Mammary epithelial cell (primary cell): ENCODE measurements at regions of chr11 and their contacts with region 1.

Region 1: DNA sequence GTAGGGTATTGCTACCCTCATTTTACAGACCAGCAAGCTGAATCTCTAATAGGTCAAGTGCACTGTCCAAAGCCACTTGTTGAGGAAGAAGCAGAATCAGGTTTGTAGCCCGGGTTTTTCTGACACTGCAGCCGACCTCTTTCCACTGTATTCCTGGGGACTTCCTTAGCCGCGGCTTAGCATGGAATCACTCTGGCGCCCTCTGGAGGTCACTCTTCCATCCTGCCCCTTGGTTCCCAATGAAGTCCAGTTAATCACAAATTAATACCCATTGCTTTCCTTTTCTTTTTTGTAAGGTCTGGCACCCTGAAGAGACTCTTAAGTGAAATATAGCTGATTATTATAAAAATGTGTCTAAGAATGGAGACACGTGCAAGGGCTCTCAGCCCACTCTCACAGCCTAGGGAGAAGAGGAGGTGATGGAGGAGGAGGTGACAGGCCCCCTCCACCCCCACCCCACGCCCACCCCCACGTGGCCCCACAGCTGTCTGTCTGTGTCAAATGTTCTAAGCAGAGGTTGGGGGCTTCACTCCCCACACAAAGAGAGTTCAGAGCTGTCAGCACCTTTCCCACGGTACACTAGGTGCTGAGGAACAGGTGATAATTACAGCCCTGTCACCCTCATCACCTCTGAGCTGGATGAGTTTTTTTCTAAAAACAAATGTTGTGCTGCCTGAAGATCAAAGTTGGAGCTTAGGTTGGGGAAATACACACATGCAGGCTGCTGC is 57.7 kb upstream of the DRD2 start:
- DNase-seq: peak; percentile 64
- H3K4me3 ChIP-seq: no peak overlapping the region
- H3K27ac ChIP-seq: no peak overlapping the region
- H3K4me1 ChIP-seq: peaks cover 40% of the 10 kb centered on the region
- H3K27me3 ChIP-seq: no peaks in the 10 kb centered on the region
- CTCF ChIP-seq: peak; percentile 93 to 96

Region 2: GRCh38 chr11:113314389-113315301 is 218.2 kb before region 1 on chr11 and contains the start of gene TTC12:
- CTCF ChIA-PET with region 1: no interaction called
- dilution Hi-C with region 1: no loop called
- in situ Hi-C with region 1: loop called (anchors 5 kb)
- intact Hi-C with region 1: loop called (anchors 2 kb)
- DNase-seq: peak; percentile 94
- H3K4me3 ChIP-seq: peak within 1 kb of the TSS; percentile 68 to 95 (median 89)
- H3K27ac ChIP-seq: peak within 1 kb of the TSS; percentile 95
- H3K4me1 ChIP-seq: peaks cover 35% of the 10 kb centered on the region
- H3K27me3 ChIP-seq: no peaks in the 10 kb centered on the region
- CTCF ChIP-seq: no peak
- total RNA-seq, gene TTC12: 32.5 to 36.5 TPM

Region 3: DNA sequence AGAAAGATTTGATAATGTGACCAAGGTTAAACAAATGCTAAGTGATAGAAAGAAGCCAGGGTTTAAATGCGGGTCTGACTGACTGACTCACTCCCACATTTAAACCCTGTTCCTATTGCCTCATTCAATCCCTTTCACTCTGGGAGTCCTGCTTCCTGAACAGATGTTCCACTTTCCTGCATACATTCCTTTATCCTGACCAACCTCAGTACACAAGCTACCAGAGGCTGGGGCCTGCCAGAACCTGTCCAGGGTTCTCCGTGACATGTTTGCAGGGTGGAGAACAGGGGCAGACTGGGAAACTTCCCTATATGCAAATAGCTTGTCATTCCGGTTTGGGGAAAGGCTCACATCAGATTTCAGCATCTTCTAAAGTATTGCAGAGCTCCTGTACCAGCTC is 148.3 kb before region 1 on chr11:
- CTCF ChIA-PET with region 1: interaction called, 4 read pairs
- dilution Hi-C with region 1: no loop called
- in situ Hi-C with region 1: no loop called
- intact Hi-C with region 1: loop called (anchors 5 kb)
- DNase-seq: peak; percentile 100
- H3K4me3 ChIP-seq: no peak overlapping the region
- H3K27ac ChIP-seq: peak overlapping the region; percentile 85
- H3K4me1 ChIP-seq: peaks cover 41% of the 10 kb centered on the region
- H3K27me3 ChIP-seq: no peaks in the 10 kb centered on the region
- CTCF ChIP-seq: no peak

Region 4: DNA sequence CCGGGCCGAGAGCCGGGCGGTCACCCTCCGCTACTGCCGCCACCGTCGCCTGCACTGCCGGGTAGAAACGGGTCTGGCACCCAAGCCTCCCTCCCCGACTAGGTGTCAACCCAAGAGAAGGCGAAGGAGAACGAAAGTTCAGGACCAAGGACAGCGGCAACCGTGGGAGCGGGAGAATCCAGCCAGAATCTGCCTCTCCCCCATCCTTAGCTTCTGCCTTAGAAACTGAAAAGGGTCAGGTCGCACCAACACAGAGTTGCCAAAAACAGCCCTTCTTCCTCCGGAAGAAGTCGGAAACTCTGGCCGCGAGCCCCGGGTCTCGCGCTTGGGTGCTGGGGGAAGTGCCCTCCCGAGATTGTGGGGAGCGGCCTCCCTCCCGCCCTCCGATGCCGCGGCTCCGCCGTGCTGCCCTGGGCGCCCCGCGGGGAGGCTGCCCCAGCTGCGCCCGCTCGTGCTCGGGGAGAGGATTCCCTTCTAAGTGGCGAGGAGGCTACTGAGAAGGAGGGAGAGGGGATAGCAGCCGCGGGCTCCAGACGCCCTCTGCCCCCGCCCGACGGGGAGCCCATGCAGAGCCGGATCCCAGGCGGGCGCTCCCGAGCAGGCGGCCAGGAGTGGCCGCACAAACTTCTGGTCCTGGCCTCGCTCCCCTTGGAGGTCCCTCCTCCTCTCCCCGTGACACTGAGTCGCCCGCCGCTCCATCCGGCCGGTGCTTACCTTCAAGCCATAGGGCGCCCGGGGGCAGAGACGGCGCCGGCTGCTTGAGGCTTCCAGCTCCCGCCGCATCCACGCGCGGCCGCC is 58.3 kb before region 1 on chr11:
- CTCF ChIA-PET with region 1: no interaction called
- dilution Hi-C with region 1: no loop called
- in situ Hi-C with region 1: no loop called
- intact Hi-C with region 1: loop called (anchors 1 kb)
- DNase-seq: peak; percentile 84
- H3K4me3 ChIP-seq: peak overlapping the region; percentile 49 to 59 (median 50)
- H3K27ac ChIP-seq: peak overlapping the region; percentile 16
- H3K4me1 ChIP-seq: peaks cover 14% of the 10 kb centered on the region
- H3K27me3 ChIP-seq: no peaks in the 10 kb centered on the region
- CTCF ChIP-seq: no peak

Region 5: GRCh38 chr11:113577356-113578032 is 44.6 kb after region 1 on chr11:
- CTCF ChIA-PET with region 1: no interaction called
- dilution Hi-C with region 1: no loop called
- in situ Hi-C with region 1: no loop called
- intact Hi-C with region 1: no loop called
- DNase-seq: peak; percentile 14
- H3K4me3 ChIP-seq: no peak overlapping the region
- H3K27ac ChIP-seq: no peak overlapping the region
- H3K4me1 ChIP-seq: peaks cover 11% of the 10 kb centered on the region
- H3K27me3 ChIP-seq: no peaks in the 10 kb centered on the region
- CTCF ChIP-seq: no peak

Region 6: GRCh38 chr11:113603277-113604059 is 70.6 kb after region 1 on chr11:
- CTCF ChIA-PET with region 1: no interaction called
- dilution Hi-C with region 1: no loop called
- in situ Hi-C with region 1: no loop called
- intact Hi-C with region 1: no loop called
- DNase-seq: no peak
- H3K4me3 ChIP-seq: no peak overlapping the region
- H3K27ac ChIP-seq: no peak overlapping the region
- H3K4me1 ChIP-seq: no peaks in the 10 kb centered on the region
- H3K27me3 ChIP-seq: no peaks in the 10 kb centered on the region
- CTCF ChIP-seq: no peak

Region 7: GRCh38 chr11:113644605-113645004 is 111.7 kb after region 1 on chr11:
- CTCF ChIA-PET with region 1: no interaction called
- dilution Hi-C with region 1: no loop called
- in situ Hi-C with region 1: no loop called
- intact Hi-C with region 1: no loop called
- DNase-seq: no peak
- H3K4me3 ChIP-seq: no peak overlapping the region
- H3K27ac ChIP-seq: no peak overlapping the region
- H3K4me1 ChIP-seq: no peaks in the 10 kb centered on the region
- H3K27me3 ChIP-seq: no peaks in the 10 kb centered on the region
- CTCF ChIP-seq: no peak

Region 8: DNA sequence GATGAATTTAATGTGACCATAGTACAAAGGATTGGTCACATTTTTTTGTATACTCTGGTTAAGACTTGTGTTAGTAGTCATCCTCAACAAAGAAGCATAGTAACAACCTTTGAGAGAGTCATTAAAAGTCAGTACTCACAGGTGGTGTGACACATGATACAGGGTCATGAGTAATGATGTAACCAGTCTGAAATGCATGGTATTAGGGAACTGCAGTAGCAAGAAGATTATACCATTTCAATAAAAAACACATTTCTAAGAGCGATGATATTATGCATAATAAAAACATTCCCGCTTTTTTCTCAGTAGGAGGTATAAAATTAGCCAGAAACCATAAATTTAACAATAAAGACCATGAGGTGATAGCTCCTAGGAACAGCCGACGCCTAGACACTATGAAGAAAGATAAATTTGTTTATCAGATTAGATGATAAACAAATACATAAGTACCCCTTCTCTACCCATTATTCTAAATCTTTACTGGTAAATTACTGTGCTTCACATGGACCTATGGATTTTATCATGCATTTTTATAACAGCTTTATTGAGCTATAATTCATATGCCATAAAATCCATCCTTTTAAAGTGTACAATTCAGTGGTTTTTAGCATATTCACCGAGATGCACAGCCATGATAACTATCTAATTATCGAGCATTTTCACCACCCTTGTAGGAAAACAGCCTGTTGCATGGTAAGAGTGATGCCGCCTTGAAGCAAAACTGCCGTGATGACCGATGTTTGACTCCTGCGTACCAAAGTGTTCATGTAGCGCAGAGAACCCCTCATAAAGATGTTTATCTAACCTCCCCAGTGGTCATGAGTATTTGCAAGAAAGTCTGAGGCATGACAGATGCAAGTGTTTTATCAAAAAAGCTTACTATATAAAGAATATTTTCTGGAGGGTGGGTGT is 131.5 kb after region 1 on chr11:
- CTCF ChIA-PET with region 1: no interaction called
- dilution Hi-C with region 1: no loop called
- in situ Hi-C with region 1: no loop called
- intact Hi-C with region 1: no loop called
- DNase-seq: peak; percentile 85
- H3K4me3 ChIP-seq: no peak overlapping the region
- H3K27ac ChIP-seq: peak overlapping the region; percentile 51
- H3K4me1 ChIP-seq: peaks cover 15% of the 10 kb centered on the region
- H3K27me3 ChIP-seq: no peaks in the 10 kb centered on the region
- CTCF ChIP-seq: no peak